Aorta (tissue), 5 donors: ENCODE measurements at regions of chr7 and their contacts with region 1.

Region 1: DNA sequence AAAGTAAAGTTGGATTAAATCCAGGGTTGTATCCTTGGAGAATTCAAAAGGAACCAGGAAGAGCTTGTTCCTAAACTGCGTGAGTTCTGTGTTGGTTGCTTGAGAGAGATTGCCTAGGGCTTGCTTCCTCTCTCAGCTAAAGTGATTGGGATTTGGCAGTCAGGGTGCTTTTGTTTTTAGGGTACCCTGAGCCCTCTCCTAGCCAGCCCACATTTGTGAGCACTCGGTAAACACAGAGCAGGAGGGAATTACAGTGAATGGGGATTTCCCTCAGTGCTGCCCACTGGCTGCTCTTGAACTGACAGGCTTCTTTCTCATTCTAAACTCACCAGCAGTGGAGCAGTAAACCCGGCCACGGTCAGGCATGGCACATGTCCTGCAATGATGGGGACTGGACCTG is 146.9 kb downstream of the TPST1 start:
- DNase-seq: no peak
- ATAC-seq: no peak
- H3K4me3 ChIP-seq: no peak overlapping the region
- H3K27ac ChIP-seq: no peak overlapping the region
- H3K4me1 ChIP-seq: no peaks in the 10 kb centered on the region
- H3K27me3 ChIP-seq: no peaks in the 10 kb centered on the region

Region 2: DNA sequence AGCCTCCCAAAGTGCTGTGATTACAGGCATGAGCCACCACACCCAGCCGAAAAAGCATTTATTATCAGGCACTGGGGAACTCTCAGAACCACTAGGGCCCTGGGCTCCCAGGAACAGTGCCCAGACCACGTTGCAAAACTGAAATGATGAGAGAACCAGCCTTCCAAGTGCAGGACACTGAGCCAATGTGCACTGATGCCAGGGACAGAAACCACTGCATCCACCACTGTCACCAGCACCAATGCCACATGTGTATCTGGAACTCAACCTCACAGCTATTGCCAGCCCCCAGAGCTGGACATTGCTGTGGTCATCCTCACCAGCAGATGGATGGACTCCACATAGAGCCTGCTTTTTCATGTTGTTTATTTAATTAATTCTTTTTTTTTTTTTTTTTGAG is 175.2 kb before region 1 on chr7:
- intact Hi-C with region 1: no loop called
- DNase-seq: peak in 1 of 2 donors; percentile 53
- ATAC-seq: peak; percentile 41
- H3K4me3 ChIP-seq: no peak overlapping the region
- H3K27ac ChIP-seq: no peak overlapping the region
- H3K4me1 ChIP-seq: no peaks in the 10 kb centered on the region
- H3K27me3 ChIP-seq: no peaks in the 10 kb centered on the region

Region 3: GRCh38 chr7:66204822-66205740 is 147.0 kb before region 1 on chr7 and contains the start of gene TPST1:
- intact Hi-C with region 1: loop called in 1 of 2 experiments (anchors 5 kb)
- DNase-seq: peak; percentile 91 to 95
- ATAC-seq: peak; percentile 94
- H3K4me3 ChIP-seq: peak within 1 kb of the TSS; percentile 56 to 71
- H3K27ac ChIP-seq: peak within 1 kb of the TSS in 1 of 2 donors; percentile 44
- H3K4me1 ChIP-seq: no peaks in the 10 kb centered on the region
- H3K27me3 ChIP-seq: no peaks in the 10 kb centered on the region
- total RNA-seq, gene TPST1: 22.0 to 38.8 TPM